BJ (cell line): ENCODE measurements at regions of chr5 and their contacts with region 1.

Region 1: DNA sequence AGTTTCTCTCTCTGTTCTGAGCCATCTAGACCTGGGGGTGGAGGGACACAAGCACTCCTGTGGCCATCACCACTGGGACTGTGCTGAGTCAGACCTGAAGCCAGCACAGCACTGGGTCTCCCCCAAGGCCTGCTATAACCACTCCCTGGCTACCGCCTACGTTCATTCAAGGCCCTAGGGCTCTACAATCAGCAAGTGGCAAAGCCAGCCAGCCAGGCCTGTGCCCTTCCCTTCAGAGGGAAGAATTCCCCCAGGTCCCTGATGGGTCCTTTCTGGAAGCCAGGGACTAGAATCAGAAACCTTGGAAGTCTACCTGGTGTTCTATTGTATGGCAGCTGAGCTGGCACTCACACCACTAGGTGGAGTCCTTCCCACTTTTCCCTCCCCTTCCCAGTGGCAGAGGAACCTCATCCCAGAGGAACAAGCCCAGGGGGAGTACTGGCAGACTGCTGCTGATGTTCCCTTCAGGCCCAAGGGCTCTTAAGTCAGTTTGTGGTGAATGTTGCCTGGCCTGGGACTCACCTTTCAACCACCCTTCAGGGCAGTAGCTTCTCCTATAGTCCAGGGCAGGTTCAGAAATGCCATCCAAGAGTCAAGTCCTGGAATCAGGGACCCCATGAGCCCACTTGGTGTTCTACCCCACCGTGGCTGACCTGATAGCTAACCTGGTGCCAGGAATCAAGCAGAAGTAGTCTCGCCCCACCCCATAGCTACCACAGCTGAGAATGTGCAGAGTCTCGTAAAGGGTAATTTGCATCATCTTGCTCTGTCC is 20.0 kb downstream of the JMY start:
- DNase-seq: no peak
- H3K4me3 ChIP-seq: no peak overlapping the region
- H3K27me3 ChIP-seq: no peaks in the 10 kb centered on the region
- CTCF ChIP-seq: peak; percentile 73

Region 2: DNA sequence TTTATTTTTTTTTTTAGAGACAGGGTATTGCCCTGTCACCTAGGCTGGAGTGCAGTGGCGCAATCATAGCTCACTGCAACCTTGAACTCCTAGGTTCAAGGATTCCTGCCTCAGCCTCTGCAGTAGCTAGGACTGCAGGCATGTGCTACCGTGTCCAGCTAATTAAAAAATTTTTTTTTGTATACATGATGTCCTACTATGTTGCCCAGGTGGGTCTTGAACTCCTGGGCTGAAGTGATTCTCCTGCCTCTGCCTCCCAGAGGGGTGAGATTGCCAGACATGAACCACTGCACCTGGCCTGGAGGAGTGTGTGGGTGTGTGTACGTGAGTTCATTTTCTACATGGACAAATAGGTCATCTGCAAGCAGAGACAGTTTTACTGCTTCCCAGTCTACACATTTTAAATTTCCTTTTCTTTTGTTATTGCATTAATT is 13.8 kb after region 1 on chr5:
- CTCF ChIA-PET with region 1: interaction called, 11 read pairs
- POLR2A ChIA-PET with region 1: no interaction called
- DNase-seq: no peak
- H3K4me3 ChIP-seq: no peak overlapping the region
- H3K27me3 ChIP-seq: no peaks in the 10 kb centered on the region
- CTCF ChIP-seq: no peak

Region 3: GRCh38 chr5:79464695-79465332 is 208.8 kb after region 1 on chr5:
- CTCF ChIA-PET with region 1: interaction called, 10 read pairs
- POLR2A ChIA-PET with region 1: no interaction called
- DNase-seq: no peak
- H3K4me3 ChIP-seq: no peak overlapping the region
- H3K27me3 ChIP-seq: no peaks in the 10 kb centered on the region
- CTCF ChIP-seq: peak; percentile 55